K562 (cell line): ENCODE measurements at regions of chr12 and their contacts with region 1.

Region 1: GRCh38 chr12:72017054-72017651 is 78.5 kb downstream of the TPH2 start:
- DNase-seq: peak; percentile 61 to 79 (median 72)
- ATAC-seq: peak; percentile 97
- H3K4me3 ChIP-seq: no peak overlapping the region
- H3K27ac ChIP-seq: no peak overlapping the region
- H3K4me1 ChIP-seq: no peaks in the 10 kb centered on the region
- H3K27me3 ChIP-seq: no peaks in the 10 kb centered on the region
- CTCF ChIP-seq: peak; percentile 67 to 82 (median 75)
- EP300 ChIP-seq: no peak
- POLR2A ChIP-seq: no peak
- RAD21 ChIP-seq: peak; percentile 70 to 86

Region 2: DNA sequence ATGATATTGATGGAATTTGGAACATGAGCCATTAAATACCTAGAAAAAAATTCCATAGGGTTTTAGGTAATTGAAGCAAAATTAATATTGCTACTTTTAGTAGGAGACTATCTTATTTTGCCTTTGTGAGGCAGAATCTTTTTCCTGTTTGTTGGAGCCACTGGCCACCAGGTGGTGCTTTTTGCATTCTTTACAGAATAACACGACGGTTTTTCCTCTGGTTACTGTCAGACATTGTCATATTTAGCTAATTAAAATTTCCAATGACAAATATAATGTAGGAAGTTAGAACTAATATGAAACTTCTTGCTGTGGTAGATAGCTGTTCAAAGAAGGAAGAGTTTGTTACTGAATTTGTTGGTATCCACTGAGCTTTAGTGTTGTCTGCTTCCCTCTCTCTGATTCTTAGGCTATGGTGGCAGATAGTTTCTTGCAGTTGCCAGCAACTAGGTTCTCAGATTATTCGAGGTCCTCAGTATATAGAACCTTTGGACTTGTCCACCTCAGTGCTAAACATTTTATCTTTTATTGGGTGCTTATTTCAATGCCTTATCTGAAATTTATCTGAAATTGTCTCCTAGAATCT is 236.8 kb before region 1 on chr12:
- CTCF ChIA-PET with region 1: no interaction called
- POLR2A ChIA-PET with region 1: no interaction called
- in situ Hi-C with region 1: no loop called
- intact Hi-C with region 1: loop called (anchors 10 kb)
- DNase-seq: peak; percentile 27 to 62 (median 32)
- ATAC-seq: peak; percentile 83
- H3K4me3 ChIP-seq: no peak overlapping the region
- H3K27ac ChIP-seq: no peak overlapping the region
- H3K4me1 ChIP-seq: no peaks in the 10 kb centered on the region
- H3K27me3 ChIP-seq: no peaks in the 10 kb centered on the region
- CTCF ChIP-seq: peak; percentile 55 to 73 (median 70); a peak in 5 of 6 replicates
- EP300 ChIP-seq: no peak
- POLR2A ChIP-seq: no peak
- RAD21 ChIP-seq: peak; percentile 70 to 82

Region 3: GRCh38 chr12:72081777-72082176 is 64.6 kb after region 1 on chr12:
- CTCF ChIA-PET with region 1: no interaction called
- POLR2A ChIA-PET with region 1: no interaction called
- in situ Hi-C with region 1: no loop called
- intact Hi-C with region 1: loop called (anchors 1 kb)
- DNase-seq: no peak
- ATAC-seq: no peak
- H3K4me3 ChIP-seq: no peak overlapping the region
- H3K27ac ChIP-seq: no peak overlapping the region
- H3K4me1 ChIP-seq: no peaks in the 10 kb centered on the region
- H3K27me3 ChIP-seq: no peaks in the 10 kb centered on the region
- CTCF ChIP-seq: no peak
- EP300 ChIP-seq: no peak
- POLR2A ChIP-seq: no peak
- RAD21 ChIP-seq: no peak

Region 4: GRCh38 chr12:72133497-72134055 is 116.4 kb after region 1 on chr12:
- CTCF ChIA-PET with region 1: no interaction called
- POLR2A ChIA-PET with region 1: no interaction called
- in situ Hi-C with region 1: no loop called
- intact Hi-C with region 1: loop called (anchors 5 kb)
- DNase-seq: no peak
- ATAC-seq: peak; percentile 73
- H3K4me3 ChIP-seq: no peak overlapping the region
- H3K27ac ChIP-seq: no peak overlapping the region
- H3K4me1 ChIP-seq: no peaks in the 10 kb centered on the region
- H3K27me3 ChIP-seq: no peaks in the 10 kb centered on the region
- CTCF ChIP-seq: peak in 2 of 3 experiments; percentile 9 to 20; a peak in 1 of 6 replicates
- EP300 ChIP-seq: no peak
- POLR2A ChIP-seq: no peak
- RAD21 ChIP-seq: no peak

Region 5: DNA sequence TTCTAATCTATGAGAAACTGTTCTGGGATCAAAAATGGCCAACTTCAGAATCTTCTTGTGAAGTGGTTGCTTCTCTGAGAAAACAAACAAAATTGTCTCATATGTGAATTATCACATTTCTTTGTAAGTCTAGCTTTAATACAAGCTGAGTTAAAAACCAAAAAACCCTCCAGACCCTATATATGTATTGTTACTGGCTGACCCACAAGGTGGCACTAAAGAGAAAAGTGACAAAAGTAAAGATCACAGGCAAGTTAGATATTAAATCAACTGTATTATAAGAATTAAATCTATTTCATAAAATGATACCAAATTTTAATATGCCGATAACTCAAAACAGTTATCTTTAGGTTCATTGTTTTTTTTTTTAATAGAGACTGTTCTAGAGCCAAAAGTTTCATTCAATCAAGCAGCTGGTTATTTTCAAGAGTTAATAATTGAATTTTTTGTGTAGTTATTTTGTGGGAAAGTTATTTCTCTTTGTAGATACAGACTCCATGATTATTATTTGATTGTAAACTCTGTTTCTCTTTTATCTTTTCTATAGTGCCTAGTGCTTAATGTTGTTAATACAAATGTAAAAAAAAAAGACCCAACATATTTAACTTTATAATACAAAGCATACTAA is 247.5 kb after region 1 on chr12:
- CTCF ChIA-PET with region 1: no interaction called
- POLR2A ChIA-PET with region 1: no interaction called
- in situ Hi-C with region 1: no loop called
- intact Hi-C with region 1: loop called (anchors 5 kb)
- DNase-seq: peak in 3 of 4 experiments; percentile 9 to 16 (median 13)
- ATAC-seq: peak; percentile 55; the same call in 1 of the 3 replicates
- H3K4me3 ChIP-seq: no peak overlapping the region
- H3K27ac ChIP-seq: no peak overlapping the region
- H3K4me1 ChIP-seq: no peaks in the 10 kb centered on the region
- H3K27me3 ChIP-seq: no peaks in the 10 kb centered on the region
- CTCF ChIP-seq: peak in 1 of 3 experiments; percentile 25; a peak in 2 of 6 replicates
- EP300 ChIP-seq: no peak
- POLR2A ChIP-seq: no peak
- RAD21 ChIP-seq: peak in 1 of 2 experiments; percentile 47; a peak in 1 of 4 replicates

Region 6: GRCh38 chr12:72346363-72346944 is 329.3 kb after region 1 on chr12:
- CTCF ChIA-PET with region 1: no interaction called
- POLR2A ChIA-PET with region 1: no interaction called
- in situ Hi-C with region 1: no loop called
- intact Hi-C with region 1: loop called (anchors 10 kb)
- DNase-seq: peak; percentile 14 to 60 (median 24)
- ATAC-seq: peak; percentile 89
- H3K4me3 ChIP-seq: no peak overlapping the region
- H3K27ac ChIP-seq: no peak overlapping the region
- H3K4me1 ChIP-seq: no peaks in the 10 kb centered on the region
- H3K27me3 ChIP-seq: no peaks in the 10 kb centered on the region
- CTCF ChIP-seq: peak; percentile 23 to 56 (median 50); a peak in 5 of 6 replicates
- EP300 ChIP-seq: no peak
- POLR2A ChIP-seq: no peak
- RAD21 ChIP-seq: peak; percentile 54 to 82